PC-9 (cell line): ENCODE measurements at regions of chr6 and their contacts with region 1.

Region 1: DNA sequence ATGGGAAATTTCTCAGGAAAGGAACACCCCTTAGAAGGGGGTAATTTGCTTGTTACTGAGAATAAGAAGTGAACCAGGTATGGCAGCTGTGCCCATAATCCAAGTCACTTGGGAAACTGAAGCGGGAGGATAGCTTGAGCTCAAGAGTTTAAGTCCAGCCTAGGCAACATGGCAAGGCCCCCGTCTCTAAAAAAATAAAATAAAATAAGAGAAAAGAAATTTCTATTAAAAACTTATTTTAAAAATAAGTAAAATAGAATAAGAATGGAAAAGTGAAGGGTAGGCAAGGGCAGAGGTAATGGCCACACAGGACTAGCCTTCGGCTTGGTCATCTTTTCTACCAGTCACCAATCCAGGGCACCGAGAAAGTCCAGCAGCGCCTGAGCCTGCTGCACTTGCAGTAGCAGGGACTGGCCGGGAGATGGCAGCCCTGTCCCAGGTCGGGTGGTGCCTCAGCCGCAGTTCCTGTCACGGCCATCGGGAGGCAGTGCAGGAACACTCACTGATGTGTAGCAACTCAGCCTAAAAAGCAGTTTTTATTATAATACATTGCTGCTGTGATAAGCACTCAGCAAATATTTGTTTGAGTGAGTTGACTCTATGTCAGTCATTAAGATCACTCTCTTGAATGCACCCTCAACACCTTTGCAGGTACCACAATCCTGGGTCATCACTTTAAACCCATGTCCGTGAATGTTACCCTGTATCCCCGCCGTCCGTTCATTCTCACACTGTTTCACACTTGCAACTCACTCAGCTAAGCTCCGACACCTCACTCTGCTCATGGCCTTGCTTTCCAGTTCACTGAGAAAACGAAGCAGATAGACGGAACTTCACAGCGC is 23.2 kb upstream of the GCM1 start:
- DNase-seq: peak; percentile 58 to 88
- H3K4me3 ChIP-seq: no peak overlapping the region
- H3K27ac ChIP-seq: no peak overlapping the region
- H3K4me1 ChIP-seq: peaks cover 33% of the 10 kb centered on the region
- H3K27me3 ChIP-seq: no peaks in the 10 kb centered on the region
- CTCF ChIP-seq: peak; percentile 100

Region 2: GRCh38 chr6:52910091-52910490 is 261.7 kb before region 1 on chr6:
- CTCF ChIA-PET with region 1: no interaction called
- POLR2A ChIA-PET with region 1: no interaction called
- intact Hi-C with region 1: no loop called
- DNase-seq: no peak
- H3K4me3 ChIP-seq: no peak overlapping the region
- H3K27ac ChIP-seq: no peak overlapping the region
- H3K4me1 ChIP-seq: 0 out of 2 replicates have a peak, but pooled peaks cover 6% of the 10 kb centered on the region
- H3K27me3 ChIP-seq: no peaks in the 10 kb centered on the region
- CTCF ChIP-seq: no peak

Region 3: GRCh38 chr6:53103992-53104675 is 67.7 kb before region 1 on chr6:
- CTCF ChIA-PET with region 1: interaction called, 7 read pairs
- POLR2A ChIA-PET with region 1: no interaction called
- intact Hi-C with region 1: loop called (anchors 1 kb)
- DNase-seq: peak; percentile 21 to 42
- H3K4me3 ChIP-seq: no peak overlapping the region
- H3K27ac ChIP-seq: no peak overlapping the region
- H3K4me1 ChIP-seq: peaks cover 12% of the 10 kb centered on the region
- H3K27me3 ChIP-seq: no peaks in the 10 kb centered on the region
- CTCF ChIP-seq: peak; percentile 69

Region 4: GRCh38 chr6:53263917-53264316 is 92.1 kb after region 1 on chr6:
- CTCF ChIA-PET with region 1: no interaction called
- POLR2A ChIA-PET with region 1: no interaction called
- intact Hi-C with region 1: loop called (anchors 10 kb)
- DNase-seq: no peak
- H3K4me3 ChIP-seq: no peak overlapping the region
- H3K27ac ChIP-seq: no peak overlapping the region
- H3K4me1 ChIP-seq: no peaks in the 10 kb centered on the region
- H3K27me3 ChIP-seq: no peaks in the 10 kb centered on the region
- CTCF ChIP-seq: no peak

Region 5: DNA sequence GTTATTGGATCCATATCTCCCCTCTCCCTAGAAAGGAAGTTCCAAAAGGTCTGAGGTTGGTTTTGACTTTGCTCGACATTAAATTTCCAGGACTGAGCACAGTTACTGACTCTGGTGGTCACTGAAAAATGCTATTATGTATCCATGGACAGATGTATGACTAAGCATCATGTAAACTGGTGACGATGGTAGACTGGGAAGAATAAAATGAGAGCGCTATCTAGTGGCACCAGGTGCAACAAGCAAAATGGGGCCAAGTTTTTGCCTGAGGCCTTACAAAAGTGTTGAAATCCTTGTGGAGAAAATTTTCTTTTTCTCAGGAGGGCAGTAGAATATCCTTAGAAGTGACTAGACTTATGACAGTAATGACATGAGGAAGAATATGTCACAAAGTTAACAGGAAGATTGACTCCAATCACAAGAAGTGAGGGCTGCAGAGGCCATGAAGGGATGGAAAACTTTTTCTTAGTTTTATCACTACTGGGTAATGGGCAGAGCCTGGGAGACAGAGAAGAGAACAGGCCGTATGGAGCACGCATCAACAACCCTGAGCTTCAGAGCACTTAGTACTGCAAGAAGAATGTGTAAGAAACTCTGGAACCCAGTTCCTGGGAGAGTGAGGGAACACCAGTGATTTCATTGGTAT is 265.9 kb after region 1 on chr6:
- CTCF ChIA-PET with region 1: interaction called, 4 read pairs
- POLR2A ChIA-PET with region 1: no interaction called
- intact Hi-C with region 1: loop called (anchors 1 kb)
- DNase-seq: peak; percentile 45 to 71
- H3K4me3 ChIP-seq: no peak overlapping the region
- H3K27ac ChIP-seq: no peak overlapping the region
- H3K4me1 ChIP-seq: peaks cover 15% of the 10 kb centered on the region
- H3K27me3 ChIP-seq: no peaks in the 10 kb centered on the region
- CTCF ChIP-seq: peak; percentile 72

Region 6: GRCh38 chr6:53651764-53652401 is 480.1 kb after region 1 on chr6:
- CTCF ChIA-PET with region 1: no interaction called
- POLR2A ChIA-PET with region 1: no interaction called
- intact Hi-C with region 1: loop called (anchors 1 kb)
- DNase-seq: peak; percentile 82 to 89
- H3K4me3 ChIP-seq: peak overlapping the region; percentile 65
- H3K27ac ChIP-seq: peak overlapping the region; percentile 90
- H3K4me1 ChIP-seq: peaks cover 20% of the 10 kb centered on the region
- H3K27me3 ChIP-seq: no peaks in the 10 kb centered on the region
- CTCF ChIP-seq: no peak; the same call in 1 of the 2 replicates